CD8-positive, alpha-beta T cell (primary cell): ENCODE measurements at regions of chr15 and their contacts with region 1.

Region 1: DNA sequence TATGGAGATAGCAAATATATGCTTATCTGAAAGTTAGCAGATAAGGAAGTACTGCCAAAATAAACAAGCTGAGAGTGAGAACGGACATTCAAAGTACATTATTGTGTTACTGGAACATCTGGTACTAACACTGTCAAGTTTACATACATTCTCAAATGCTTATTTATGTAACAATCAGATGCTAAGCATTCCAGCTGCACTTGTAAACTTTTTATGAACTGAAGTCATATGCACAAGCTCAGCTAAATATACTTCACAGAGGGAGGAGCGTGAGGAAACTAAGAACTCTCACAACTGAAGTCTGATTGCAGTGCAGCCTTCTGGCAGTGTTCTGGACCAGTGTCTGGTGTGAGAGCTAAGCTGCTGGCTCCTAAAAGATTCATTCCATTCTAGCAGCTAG is 223.7 kb upstream of the NANOGP8 start:
- DNase-seq: no peak
- ATAC-seq: no peak
- H3K4me3 ChIP-seq: no peak overlapping the region
- H3K4me3 Mint-ChIP-seq: no peak overlapping the region
- H3K27ac ChIP-seq: no peak overlapping the region
- H3K27ac Mint-ChIP-seq: no peak overlapping the region
- H3K4me1 ChIP-seq: no peaks in the 10 kb centered on the region
- H3K4me1 Mint-ChIP-seq: no peaks in the 10 kb centered on the region
- H3K27me3 ChIP-seq: no peaks in the 10 kb centered on the region
- H3K27me3 Mint-ChIP-seq: no peaks in the 10 kb centered on the region
- CTCF ChIP-seq: no peak

Region 2: DNA sequence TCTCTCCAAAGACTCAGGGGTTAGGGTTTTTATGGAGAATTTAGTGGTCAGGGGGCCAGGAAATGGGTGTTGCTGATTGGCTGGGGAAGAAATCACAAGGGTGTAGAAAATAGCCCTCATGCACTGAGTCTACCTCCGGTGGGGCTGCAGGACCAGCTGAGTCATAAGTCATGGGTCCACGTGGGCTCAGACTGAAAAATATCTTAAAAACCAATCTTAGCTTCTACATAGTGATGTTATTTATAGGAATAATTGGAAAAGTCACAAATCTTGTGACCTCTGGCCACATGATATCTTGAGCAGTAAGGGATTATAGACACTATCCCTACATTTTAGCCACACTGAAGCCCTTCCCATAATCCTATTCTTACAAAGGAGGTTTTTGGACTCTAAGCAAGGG is 13.1 kb after region 1 on chr15:
- CTCF ChIA-PET with region 1: interaction called, 4 read pairs
- POLR2A ChIA-PET with region 1: no interaction called
- intact Hi-C with region 1: loop called in 1 of 2 experiments (anchors 1 kb)
- DNase-seq: no peak
- ATAC-seq: no peak
- H3K4me3 ChIP-seq: no peak overlapping the region
- H3K4me3 Mint-ChIP-seq: no peak overlapping the region
- H3K27ac ChIP-seq: no peak overlapping the region
- H3K27ac Mint-ChIP-seq: no peak overlapping the region
- H3K4me1 ChIP-seq: no peaks in the 10 kb centered on the region
- H3K4me1 Mint-ChIP-seq: no peaks in the 10 kb centered on the region
- H3K27me3 ChIP-seq: no peaks in the 10 kb centered on the region
- H3K27me3 Mint-ChIP-seq: no peaks in the 10 kb centered on the region
- CTCF ChIP-seq: no peak

Region 3: DNA sequence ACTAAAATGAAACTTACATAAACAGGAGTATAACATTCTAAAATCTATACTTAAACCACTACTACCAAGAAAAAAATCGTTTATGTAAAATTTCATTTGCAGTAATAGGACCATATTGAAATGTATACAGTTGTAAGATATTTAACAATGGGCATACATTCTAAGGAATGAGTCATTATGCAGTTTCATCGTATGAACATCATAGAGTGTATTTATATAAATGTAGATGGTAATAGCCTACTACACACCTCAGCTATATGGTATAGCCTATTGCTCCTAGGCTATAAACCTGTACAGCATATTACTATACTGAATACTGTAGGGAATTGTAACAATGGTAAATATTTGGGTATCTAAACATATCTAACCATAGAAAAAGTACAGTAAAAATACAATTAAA is 157.7 kb after region 1 on chr15:
- CTCF ChIA-PET with region 1: no interaction called
- POLR2A ChIA-PET with region 1: no interaction called
- intact Hi-C with region 1: no loop called
- DNase-seq: no peak
- ATAC-seq: no peak
- H3K4me3 ChIP-seq: no peak overlapping the region
- H3K4me3 Mint-ChIP-seq: no peak overlapping the region
- H3K27ac ChIP-seq: no peak overlapping the region
- H3K27ac Mint-ChIP-seq: no peak overlapping the region
- H3K4me1 ChIP-seq: no peaks in the 10 kb centered on the region
- H3K4me1 Mint-ChIP-seq: no peaks in the 10 kb centered on the region
- H3K27me3 ChIP-seq: no peaks in the 10 kb centered on the region
- H3K27me3 Mint-ChIP-seq: no peaks in the 10 kb centered on the region
- CTCF ChIP-seq: no peak